ENCODE measurements at regions of chr3 and their contacts with region 1.

Region 1: DNA sequence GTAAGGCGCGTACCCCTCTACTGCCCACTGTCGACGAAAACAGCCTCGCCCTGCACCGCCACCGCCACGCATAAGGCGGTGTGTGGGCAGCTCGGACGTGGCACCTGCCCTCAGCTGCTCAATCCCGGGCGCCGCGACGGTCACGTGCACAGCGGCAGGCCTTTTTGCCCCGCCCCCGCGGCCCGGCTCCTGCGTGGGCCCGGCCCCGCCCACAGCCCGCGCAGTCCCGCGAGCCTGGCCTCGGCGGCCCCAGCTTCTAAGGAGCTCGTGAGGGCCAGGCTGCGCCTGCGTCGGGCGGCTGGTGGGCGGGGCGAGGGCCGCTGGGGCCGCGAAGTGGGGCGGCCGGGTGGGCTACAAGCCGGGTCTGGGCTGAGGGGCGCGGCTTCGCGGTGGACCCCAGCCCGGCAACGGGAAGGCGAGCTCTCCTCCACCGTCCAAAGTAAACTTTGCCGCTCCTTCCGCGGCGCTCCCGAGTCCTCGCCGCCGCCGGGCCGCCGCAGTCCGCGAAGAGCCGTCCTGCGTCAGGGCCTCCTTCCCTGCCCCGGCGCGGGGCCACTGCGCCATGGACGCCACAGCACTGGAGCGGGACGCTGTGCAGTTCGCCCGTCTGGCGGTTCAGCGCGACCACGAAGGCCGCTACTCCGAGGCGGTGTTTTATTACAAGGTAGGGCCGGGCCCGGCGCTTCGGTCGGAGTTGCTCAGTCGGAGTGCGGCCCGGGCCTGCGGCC is at the start of gene CAPN7:
- DNase-seq: peak; percentile 93
- H3K4me3 Mint-ChIP-seq: peak within 1 kb of the TSS; percentile 96
- H3K27ac Mint-ChIP-seq: peak within 1 kb of the TSS; percentile 92
- H3K4me1 Mint-ChIP-seq: peaks cover 31% of the 10 kb centered on the region
- H3K27me3 Mint-ChIP-seq: no peaks in the 10 kb centered on the region
- total RNA-seq, gene CAPN7: 31.8 and 33.4 TPM in 2 replicates

Region 2: DNA sequence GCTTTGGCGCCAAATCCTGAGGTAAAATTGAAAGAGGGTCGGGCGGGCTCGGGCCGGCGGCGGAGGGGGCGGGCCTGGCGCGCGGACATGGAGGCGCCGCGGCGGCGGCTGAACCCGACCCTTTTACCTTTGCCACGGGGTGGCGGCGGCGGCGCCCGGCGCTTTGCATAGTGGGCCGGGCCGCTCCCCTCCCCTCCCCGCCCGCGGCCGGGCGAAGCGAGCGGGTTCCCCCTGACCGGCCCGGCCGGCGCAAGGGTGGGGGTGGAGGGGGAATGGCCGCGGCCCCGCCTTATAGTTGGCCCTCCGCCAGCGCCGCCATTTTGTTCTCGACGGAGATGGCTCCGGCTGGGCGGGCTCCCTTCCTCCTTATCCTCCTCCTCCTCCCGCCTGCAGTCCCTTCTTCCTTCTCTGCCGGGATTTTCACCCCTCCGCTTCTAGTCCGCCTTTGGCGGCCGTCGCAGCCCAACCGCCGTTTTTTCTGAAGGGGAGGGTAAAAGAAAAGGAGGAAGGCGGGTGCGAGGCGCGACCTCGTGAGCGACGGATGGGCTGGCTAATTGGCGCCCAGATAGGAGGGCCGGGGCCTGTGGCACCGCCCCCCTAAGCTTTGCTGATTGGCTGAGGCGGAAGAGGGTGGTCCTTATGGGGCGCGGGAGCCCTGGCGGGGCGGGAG is 258.1 kb before region 1 on chr3:
- intact Hi-C with region 1: loop called (anchors 5 kb)
- DNase-seq: peak; percentile 94
- H3K4me3 Mint-ChIP-seq: peak overlapping the region; percentile 99
- H3K27ac Mint-ChIP-seq: peak overlapping the region; percentile 100
- H3K4me1 Mint-ChIP-seq: peaks cover 36% of the 10 kb centered on the region
- H3K27me3 Mint-ChIP-seq: no peaks in the 10 kb centered on the region

Region 3: GRCh38 chr3:15098503-15099363 is 107.4 kb before region 1 on chr3 and contains the start of gene RBSN:
- intact Hi-C with region 1: loop called (anchors 5 kb)
- DNase-seq: peak; percentile 96
- H3K4me3 Mint-ChIP-seq: peak within 1 kb of the TSS; percentile 91
- H3K27ac Mint-ChIP-seq: peak within 1 kb of the TSS; percentile 94
- H3K4me1 Mint-ChIP-seq: peaks cover 12% of the 10 kb centered on the region
- H3K27me3 Mint-ChIP-seq: peaks cover 2% of the 10 kb centered on the region
- total RNA-seq, gene RBSN: 11.3 and 13.0 TPM in 2 replicates

Region 4: DNA sequence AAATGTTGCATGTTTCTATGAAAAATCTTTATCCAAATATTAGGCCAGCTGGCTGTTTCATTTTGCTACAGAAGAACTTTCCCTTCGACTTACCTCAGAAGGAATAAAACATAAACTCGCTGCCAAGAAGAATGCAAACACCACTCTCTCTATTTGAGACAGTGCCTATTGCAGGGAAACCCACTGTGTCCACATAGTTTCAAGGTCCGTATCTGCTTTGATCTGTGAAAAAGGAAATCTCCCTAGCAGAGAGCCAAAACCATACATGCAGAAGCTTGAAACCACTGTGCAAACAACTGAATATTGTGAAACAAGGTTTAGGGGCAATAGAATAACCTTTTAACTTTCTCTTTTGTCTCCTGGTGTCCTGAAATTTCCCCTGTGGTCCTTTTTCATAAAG is 35.0 kb before region 1 on chr3:
- intact Hi-C with region 1: no loop called
- DNase-seq: no peak
- H3K4me3 Mint-ChIP-seq: no peak overlapping the region
- H3K27ac Mint-ChIP-seq: no peak overlapping the region
- H3K4me1 Mint-ChIP-seq: peaks cover 7% of the 10 kb centered on the region
- H3K27me3 Mint-ChIP-seq: peaks cover 44% of the 10 kb centered on the region

Region 5: GRCh38 chr3:15246186-15246585 is 40.1 kb after region 1 on chr3:
- intact Hi-C with region 1: loop called (anchors 5 kb)
- DNase-seq: no peak
- H3K4me3 Mint-ChIP-seq: no peak overlapping the region
- H3K27ac Mint-ChIP-seq: no peak overlapping the region
- H3K4me1 Mint-ChIP-seq: peaks cover 10% of the 10 kb centered on the region
- H3K27me3 Mint-ChIP-seq: no peaks in the 10 kb centered on the region

Region 6: GRCh38 chr3:15269091-15269989 is 63.2 kb after region 1 on chr3:
- intact Hi-C with region 1: no loop called
- DNase-seq: peak; percentile 83
- H3K4me3 Mint-ChIP-seq: no peak overlapping the region
- H3K27ac Mint-ChIP-seq: peak overlapping the region; percentile 72
- H3K4me1 Mint-ChIP-seq: peaks cover 48% of the 10 kb centered on the region
- H3K27me3 Mint-ChIP-seq: no peaks in the 10 kb centered on the region

Region 7: GRCh38 chr3:15284121-15284889 is 78.2 kb after region 1 on chr3:
- intact Hi-C with region 1: no loop called
- DNase-seq: no peak
- H3K4me3 Mint-ChIP-seq: no peak overlapping the region
- H3K27ac Mint-ChIP-seq: no peak overlapping the region
- H3K4me1 Mint-ChIP-seq: peaks cover 20% of the 10 kb centered on the region
- H3K27me3 Mint-ChIP-seq: no peaks in the 10 kb centered on the region

Region 8: DNA sequence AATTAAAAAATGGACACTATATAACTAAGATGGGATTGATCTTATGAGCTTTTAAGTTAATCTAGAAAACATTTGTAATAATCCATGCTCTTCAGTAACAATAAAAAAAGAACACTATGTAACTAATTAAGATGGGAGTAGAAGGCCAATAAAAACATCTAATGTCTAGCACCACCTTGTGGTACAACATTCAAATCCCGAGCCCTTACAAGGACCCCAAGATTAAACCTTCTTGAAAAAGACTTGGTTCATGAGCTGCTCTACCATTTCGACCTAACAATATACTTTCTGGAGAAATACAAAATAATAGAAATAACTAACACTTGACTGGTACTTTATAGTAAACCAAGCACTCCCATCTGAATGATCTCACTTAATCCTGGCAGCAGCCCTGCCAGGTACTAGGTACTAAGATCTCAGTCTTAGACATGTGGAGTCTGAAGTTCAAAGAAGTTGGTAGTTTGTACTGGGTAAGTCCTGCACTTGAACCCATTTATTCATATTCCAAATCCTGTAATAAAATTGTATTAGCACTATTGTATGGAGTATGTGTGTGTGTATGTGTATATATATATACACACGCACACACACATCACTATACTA is 199.5 kb after region 1 on chr3:
- intact Hi-C with region 1: loop called (anchors 1 kb)
- DNase-seq: no peak
- H3K4me3 Mint-ChIP-seq: no peak overlapping the region
- H3K27ac Mint-ChIP-seq: no peak overlapping the region
- H3K4me1 Mint-ChIP-seq: peaks cover 5% of the 10 kb centered on the region
- H3K27me3 Mint-ChIP-seq: no peaks in the 10 kb centered on the region

Region 9: DNA sequence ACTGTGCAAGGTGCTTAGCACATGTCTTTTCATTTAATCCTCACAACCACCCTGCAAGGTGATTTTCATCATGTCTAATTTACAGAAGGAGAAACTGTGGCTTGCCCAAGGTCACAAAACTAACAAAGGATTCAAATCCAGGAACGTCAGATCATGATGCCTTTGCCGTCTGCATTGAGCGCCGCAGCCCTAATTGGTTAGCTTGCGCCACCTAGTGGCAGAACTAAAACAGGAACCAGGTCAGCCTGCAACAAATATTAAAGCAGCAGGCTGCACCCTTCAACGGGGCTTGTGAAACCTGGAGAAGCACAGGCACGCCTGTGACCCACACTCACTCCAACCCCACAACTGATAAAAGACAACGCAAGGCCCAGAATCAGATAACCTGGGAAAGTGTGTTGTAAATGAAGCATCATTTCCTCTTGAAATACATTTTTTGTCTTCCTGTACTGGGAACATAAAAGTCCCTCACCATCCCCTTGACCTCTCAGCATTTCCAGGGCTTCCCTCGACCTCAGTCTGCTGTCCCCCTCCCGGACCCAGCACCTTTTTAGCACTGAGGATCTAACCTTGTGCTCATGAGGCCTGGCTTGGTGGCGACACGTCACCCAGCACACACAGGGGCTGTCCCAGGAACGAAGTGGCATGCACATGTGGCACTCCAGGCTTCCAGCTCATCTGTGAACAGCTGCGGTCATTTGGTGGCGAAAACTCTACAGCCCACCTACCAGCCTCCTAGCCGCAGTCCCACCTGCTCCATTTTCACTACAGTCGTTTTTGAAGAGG is 1041.4 kb after region 1 on chr3:
- intact Hi-C with region 1: loop called (anchors 10 kb)
- DNase-seq: peak; percentile 67
- H3K4me3 Mint-ChIP-seq: no peak overlapping the region
- H3K27ac Mint-ChIP-seq: no peak overlapping the region
- H3K4me1 Mint-ChIP-seq: peaks cover 18% of the 10 kb centered on the region
- H3K27me3 Mint-ChIP-seq: no peaks in the 10 kb centered on the region